ENCODE measurements at regions of chr2 and their contacts with region 1.

Region 1: DNA sequence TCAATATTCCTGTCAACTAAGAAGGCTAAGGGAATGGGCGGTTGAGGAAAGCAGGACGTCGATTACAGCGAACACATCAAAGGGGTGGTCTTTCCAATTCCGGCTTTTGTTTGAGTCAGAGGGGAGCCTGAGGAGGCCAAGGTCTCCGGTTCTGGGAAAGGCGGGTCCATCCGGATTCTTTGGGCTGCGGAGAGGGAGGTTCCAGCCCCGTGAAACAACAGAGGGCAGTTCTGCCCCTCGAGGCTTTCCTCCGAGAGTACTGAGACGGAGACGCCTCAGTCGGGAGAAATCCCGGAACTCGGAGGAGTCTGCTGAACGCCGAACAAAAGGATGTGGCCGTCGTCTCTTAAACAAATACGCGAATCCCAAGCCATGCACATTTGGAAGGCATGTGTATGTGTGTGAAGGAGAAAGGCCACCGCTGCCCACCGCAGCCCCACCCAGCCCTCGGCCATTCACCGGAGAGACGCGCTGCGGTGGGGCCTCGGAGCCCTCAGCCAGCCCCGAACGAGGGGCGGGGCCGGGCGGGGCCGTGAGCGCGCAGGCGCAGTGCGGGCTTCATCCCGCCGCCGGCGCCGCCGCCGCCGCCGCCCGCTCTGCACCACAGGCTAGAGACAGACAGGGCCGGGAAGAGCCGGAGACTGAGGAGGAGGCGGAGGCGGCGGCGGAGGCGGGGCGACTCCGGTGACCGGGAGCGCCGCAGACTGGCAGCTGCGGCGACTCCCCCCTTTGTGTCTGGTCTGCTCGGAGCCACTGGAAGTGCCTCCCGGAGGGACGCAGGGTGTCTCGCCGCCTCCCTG is at the start of gene BMPR2:
- DNase-seq: peak; percentile 92
- ATAC-seq: peak; percentile 91
- total RNA-seq, gene BMPR2: 45.9 TPM

Region 2: GRCh38 chr2:202278944-202279343 is 96.9 kb before region 1 on chr2:
- intact Hi-C with region 1: loop called (anchors 10 kb)
- DNase-seq: no peak
- ATAC-seq: peak; percentile 74

Region 3: GRCh38 chr2:202494300-202495229 is 118.8 kb after region 1 on chr2:
- intact Hi-C with region 1: loop called (anchors 10 kb)
- DNase-seq: no peak
- ATAC-seq: peak; percentile 61

Measured in Right ventricle myocardium superior (tissue), 1 donor.